ENCODE measurements at regions of chr12 and their contacts with region 1.

Region 1: GRCh38 chr12:50043854-50044253 is 13.5 kb upstream of the ASIC1 start:
- H3K4me3 Mint-ChIP-seq: no peak overlapping the region
- H3K27ac Mint-ChIP-seq: no peak overlapping the region
- H3K4me1 Mint-ChIP-seq: peaks cover 34% of the 10 kb centered on the region
- H3K27me3 Mint-ChIP-seq: peaks cover 9% of the 10 kb centered on the region

Region 2: DNA sequence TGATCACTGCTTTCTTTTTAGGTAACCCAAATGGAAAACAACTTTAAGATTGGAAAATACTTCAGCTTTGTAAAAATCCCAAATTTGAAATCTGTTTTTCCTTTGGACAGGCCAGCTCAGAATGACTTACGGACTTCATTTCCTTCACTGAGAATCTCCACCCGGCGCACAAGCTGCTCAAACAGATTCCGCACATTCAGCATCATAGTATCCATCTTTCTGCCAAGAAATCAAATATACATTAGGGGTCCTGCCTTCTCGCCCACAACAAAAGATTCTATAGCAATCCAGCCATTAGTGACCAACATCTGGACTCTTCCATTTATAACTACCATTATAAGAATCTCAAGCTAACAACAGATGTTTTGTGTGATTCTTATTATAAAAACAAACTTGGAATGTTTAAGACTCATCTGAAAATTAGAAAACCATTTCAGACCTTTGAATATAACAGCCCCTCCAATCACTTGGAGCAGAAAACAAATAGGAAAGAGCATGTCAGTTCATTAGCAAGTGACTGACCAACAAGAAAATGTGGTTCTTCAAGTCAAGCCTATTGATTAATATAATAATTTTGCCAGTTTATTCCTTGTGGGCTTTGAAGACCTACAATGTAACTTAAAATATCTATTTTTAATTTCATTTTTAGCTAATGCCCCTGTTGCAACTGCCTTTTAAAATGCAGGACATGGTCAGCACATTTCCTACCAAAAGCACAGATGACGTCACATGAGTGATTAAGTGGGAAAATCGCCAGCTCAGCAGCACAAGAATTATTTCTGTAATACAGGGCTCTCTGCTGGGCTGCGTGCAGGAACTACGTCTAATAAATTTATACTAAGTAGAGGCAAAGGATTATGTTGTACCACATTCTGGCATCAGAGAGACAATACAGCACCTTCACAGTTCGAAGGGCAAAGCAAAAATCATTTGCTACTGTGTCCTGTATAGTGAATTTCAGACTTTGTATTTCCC is 27.1 kb before region 1 on chr12:
- intact Hi-C with region 1: no loop called
- H3K4me3 Mint-ChIP-seq: no peak overlapping the region
- H3K27ac Mint-ChIP-seq: peak overlapping the region; percentile 65
- H3K4me1 Mint-ChIP-seq: peaks cover 14% of the 10 kb centered on the region
- H3K27me3 Mint-ChIP-seq: no peaks in the 10 kb centered on the region

Region 3: DNA sequence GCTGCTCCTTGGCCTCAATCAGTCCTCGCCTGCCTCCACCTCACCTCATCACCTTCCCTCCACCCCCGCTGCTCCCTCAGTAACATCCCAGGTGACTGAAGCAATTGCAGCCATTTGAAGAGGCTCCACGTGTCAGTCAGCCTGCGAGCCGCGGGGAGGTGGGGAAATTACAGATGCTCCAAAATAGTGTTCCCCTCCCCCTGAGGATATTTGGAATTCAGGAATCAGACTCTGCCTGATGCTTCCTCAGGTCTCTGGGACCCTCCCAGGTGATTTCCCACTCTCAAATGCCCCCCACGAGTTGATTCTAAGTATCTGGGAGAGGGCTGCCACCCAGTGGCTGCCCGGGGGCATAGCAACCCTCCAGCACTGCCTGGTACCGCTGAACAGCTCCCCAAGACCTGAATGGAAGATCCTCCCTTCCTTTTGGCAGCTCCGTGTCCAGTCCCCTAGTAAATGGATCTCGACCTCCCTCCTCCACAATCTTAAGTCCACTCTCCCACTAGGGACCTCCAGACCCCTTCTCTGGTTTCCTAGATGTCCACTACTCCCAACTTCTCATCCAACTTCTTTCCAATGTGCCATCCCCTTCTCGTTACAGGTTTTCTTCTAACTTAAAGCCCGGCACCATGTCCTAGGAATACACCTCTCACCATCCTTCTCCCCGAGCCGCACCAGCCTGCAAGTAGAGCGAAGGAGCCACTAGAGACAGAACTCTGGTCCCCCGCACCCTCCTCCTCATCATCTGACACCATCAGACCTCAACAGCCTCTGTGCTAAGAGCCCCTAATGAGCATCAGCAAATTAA is 12.2 kb after region 1 on chr12:
- intact Hi-C with region 1: loop called (anchors 1 kb)
- H3K4me3 Mint-ChIP-seq: no peak overlapping the region
- H3K27ac Mint-ChIP-seq: no peak overlapping the region
- H3K4me1 Mint-ChIP-seq: peaks cover 61% of the 10 kb centered on the region
- H3K27me3 Mint-ChIP-seq: peaks cover 62% of the 10 kb centered on the region

Region 4: GRCh38 chr12:50069539-50069938 is 25.7 kb after region 1 on chr12:
- intact Hi-C with region 1: loop called (anchors 1 kb)
- H3K4me3 Mint-ChIP-seq: no peak overlapping the region
- H3K27ac Mint-ChIP-seq: no peak overlapping the region
- H3K4me1 Mint-ChIP-seq: peaks cover 12% of the 10 kb centered on the region
- H3K27me3 Mint-ChIP-seq: peaks cover 39% of the 10 kb centered on the region

Region 5: GRCh38 chr12:50151047-50151687 is 107.3 kb after region 1 on chr12:
- intact Hi-C with region 1: no loop called
- H3K4me3 Mint-ChIP-seq: no peak overlapping the region
- H3K27ac Mint-ChIP-seq: no peak overlapping the region
- H3K4me1 Mint-ChIP-seq: peaks cover 13% of the 10 kb centered on the region
- H3K27me3 Mint-ChIP-seq: no peaks in the 10 kb centered on the region

Measured in dendritic cell treated with granulocyte-macrophage colony-stimulating factor and Interleukin-4, amounts not matched to agents 40 ng/mL and 50 ng/mL, for 4 days (primary cell).